ENCODE measurements at regions of chr1 and their contacts with region 1.

Region 1: GRCh38 chr1:245953876-245954660 is 553.0 kb downstream of the SMYD3 start:
- DNase-seq: peak in 1 of 2 donors; percentile 57
- ATAC-seq: peak; percentile 57 to 79 (median 63)
- H3K4me3 ChIP-seq: peak overlapping the region; percentile 47
- H3K4me3 Mint-ChIP-seq: peak overlapping the region; percentile 67
- H3K27ac ChIP-seq: peak overlapping the region; percentile 100
- H3K27ac Mint-ChIP-seq: no peak overlapping the region
- H3K4me1 ChIP-seq: peaks cover 35% of the 10 kb centered on the region
- H3K4me1 Mint-ChIP-seq: peaks cover 25 to 31% of the 10 kb centered on the region in 2 donors
- H3K27me3 ChIP-seq: no peaks in the 10 kb centered on the region
- H3K27me3 Mint-ChIP-seq: no peaks in the 10 kb centered on the region
- CTCF ChIP-seq: no peak

Region 2: GRCh38 chr1:245894843-245895242 is 59.2 kb before region 1 on chr1:
- intact Hi-C with region 1: loop called (anchors 10 kb)
- DNase-seq: no peak
- ATAC-seq: peak; percentile 59 to 98 (median 71)
- H3K4me3 ChIP-seq: no peak overlapping the region
- H3K4me3 Mint-ChIP-seq: peak overlapping the region; percentile 28
- H3K27ac ChIP-seq: no peak overlapping the region
- H3K27ac Mint-ChIP-seq: peak overlapping the region; percentile 41 to 78
- H3K4me1 ChIP-seq: peaks cover 11% of the 10 kb centered on the region
- H3K4me1 Mint-ChIP-seq: peaks cover 15 to 24% of the 10 kb centered on the region in 2 donors
- H3K27me3 ChIP-seq: no peaks in the 10 kb centered on the region
- H3K27me3 Mint-ChIP-seq: no peaks in the 10 kb centered on the region
- CTCF ChIP-seq: no peak